ENCODE measurements at regions of chr12 and their contacts with region 1.

Region 1: DNA sequence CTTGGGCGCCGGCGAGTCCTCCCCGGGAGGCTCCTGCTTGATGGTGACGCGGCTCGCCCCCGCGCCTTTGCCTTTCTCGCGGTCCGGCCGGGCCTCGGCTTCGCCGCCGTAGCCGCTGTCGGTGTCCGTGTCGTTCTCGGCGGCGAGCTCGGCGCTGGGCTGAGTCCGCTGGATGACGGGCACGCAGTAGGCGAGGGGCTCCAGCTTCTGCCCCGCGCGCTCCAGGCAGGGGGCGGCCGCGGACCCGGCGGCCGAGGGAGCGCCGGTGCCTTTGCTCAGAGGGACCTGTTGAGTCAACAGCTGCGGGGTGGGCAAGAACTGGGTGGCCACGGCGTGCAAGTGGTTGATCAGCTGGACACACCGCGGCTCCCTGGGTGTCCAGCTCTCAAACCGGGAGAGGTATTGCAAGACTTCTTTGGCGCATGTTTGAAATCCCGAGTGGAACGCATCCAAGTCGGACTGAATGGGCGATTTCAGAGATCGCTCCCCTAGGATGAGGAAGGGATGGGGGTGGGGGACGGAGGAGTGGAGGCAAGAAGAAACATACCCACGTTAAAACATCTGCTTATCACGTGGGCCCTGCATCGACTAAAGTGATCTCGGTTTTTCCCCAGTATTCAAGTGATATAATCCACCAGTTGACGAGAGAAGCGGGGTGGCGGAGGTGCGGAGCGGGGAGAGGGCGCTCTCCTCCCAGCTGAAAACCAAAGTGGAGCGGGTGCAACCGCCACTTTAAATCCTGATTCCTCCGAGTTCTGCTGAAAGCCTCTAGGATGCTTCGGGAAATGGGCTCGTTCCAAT is 2.0 kb downstream of the BHLHE41 start:
- H3K4me3 ChIP-seq: peak overlapping the region; percentile 63
- H3K27ac ChIP-seq: peak overlapping the region; percentile 86; the same call in 1 of the 2 replicates
- H3K4me1 ChIP-seq: peaks cover 9% of the 10 kb centered on the region; the same call in 1 of the 2 replicates
- CTCF ChIP-seq: peak; percentile 63

Region 2: DNA sequence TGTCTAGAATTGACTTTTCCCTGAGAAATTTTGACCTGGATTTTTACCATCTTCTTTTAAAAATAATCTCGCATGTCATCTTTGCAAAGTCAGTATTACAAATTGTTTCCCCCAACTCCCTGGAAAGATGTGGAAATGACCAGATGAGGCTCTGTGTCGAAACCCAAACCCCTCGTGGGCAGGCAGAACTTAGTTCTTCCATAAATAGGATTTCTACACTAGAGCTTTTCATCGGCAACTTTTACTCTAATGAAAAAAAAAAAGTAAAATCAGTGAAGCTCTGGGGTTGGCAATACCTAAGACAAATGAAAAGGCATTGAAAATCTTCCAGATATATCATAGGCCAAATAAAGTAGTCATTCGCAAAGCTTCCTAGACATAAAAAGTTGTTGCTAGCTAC is 89.5 kb after region 1 on chr12:
- CTCF ChIA-PET with region 1: no interaction called
- POLR2A ChIA-PET with region 1: no interaction called
- H3K4me3 ChIP-seq: no peak overlapping the region
- H3K27ac ChIP-seq: no peak overlapping the region
- H3K4me1 ChIP-seq: no peaks in the 10 kb centered on the region
- CTCF ChIP-seq: no peak

Region 3: DNA sequence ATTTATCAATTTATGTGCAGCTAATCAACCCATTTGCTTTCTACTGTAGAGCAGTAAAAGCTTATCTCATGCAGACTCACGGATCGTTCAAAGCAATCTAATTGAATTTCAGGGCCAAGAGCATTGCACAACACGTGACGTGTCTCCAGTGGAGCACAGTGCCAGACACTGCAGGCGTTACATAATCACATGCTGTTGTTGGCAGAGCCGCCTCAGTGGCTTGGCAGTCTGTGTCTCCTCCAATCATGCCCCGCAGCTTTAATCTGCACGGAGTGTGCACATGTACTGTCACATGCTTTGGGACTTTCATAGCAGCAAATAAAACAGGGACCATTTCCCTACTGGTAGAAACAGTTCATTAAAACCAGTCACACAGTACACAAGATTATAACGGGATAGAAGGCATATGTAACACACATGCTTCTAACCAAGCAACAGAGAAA is 400.8 kb after region 1 on chr12:
- CTCF ChIA-PET with region 1: interaction called, 10 read pairs
- POLR2A ChIA-PET with region 1: no interaction called
- H3K4me3 ChIP-seq: no peak overlapping the region
- H3K27ac ChIP-seq: no peak overlapping the region
- H3K4me1 ChIP-seq: no peaks in the 10 kb centered on the region
- CTCF ChIP-seq: no peak

Region 4: GRCh38 chr12:26614020-26614616 is 491.2 kb after region 1 on chr12:
- CTCF ChIA-PET with region 1: interaction called, 19 read pairs
- POLR2A ChIA-PET with region 1: no interaction called
- H3K4me3 ChIP-seq: no peak overlapping the region
- H3K27ac ChIP-seq: no peak overlapping the region
- H3K4me1 ChIP-seq: no peaks in the 10 kb centered on the region
- CTCF ChIP-seq: 0 out of 2 replicates have a peak, but pooled peaks have one; percentile 9

Region 5: DNA sequence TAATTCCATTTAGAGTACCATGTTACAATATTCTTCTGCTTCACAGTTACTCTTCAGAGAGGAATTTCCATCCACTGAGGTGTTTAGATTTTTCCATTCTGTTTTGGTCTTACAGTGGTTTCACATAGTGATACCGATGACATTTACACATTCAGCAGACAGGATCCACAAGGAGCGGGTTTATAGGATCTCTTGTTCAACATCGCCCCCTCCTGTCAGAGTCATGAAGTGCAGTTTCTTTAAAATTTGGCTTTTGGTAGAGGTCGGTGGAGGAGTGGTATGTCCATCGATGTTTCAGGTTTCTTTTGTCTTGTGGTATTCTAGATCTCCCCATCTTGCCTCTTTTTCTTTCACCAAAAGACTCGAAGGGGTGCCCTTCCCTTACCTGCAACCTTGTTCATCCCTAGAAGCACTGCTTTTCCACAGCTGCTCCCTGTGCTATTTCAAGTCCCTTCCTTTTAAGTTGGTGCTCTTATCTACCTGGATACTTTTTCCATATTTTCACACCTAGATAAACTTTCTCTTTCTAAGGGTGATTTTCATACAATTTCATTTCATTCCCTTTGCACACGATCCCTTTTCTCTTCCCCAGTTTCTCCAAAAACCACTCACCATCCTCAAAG is 528.8 kb after region 1 on chr12:
- CTCF ChIA-PET with region 1: interaction called, 21 read pairs
- POLR2A ChIA-PET with region 1: no interaction called
- H3K4me3 ChIP-seq: no peak overlapping the region
- H3K27ac ChIP-seq: no peak overlapping the region
- H3K4me1 ChIP-seq: no peaks in the 10 kb centered on the region
- CTCF ChIP-seq: peak; percentile 57